B cell (primary cell): ENCODE measurements at regions of chr4 and their contacts with region 1.

Region 1: GRCh38 chr4:40778090-40778489 is 28.3 kb downstream of the NSUN7 start:
- DNase-seq: no peak
- ATAC-seq: no peak
- H3K4me3 ChIP-seq: no peak overlapping the region
- H3K4me3 Mint-ChIP-seq: no peak overlapping the region
- H3K27ac ChIP-seq: no peak overlapping the region
- H3K27ac Mint-ChIP-seq: no peak overlapping the region
- H3K4me1 ChIP-seq: peaks cover 3 to 5% of the 10 kb centered on the region in 2 donors
- H3K4me1 Mint-ChIP-seq: peaks cover 5% of the 10 kb centered on the region
- H3K27me3 ChIP-seq: no peaks in the 10 kb centered on the region
- H3K27me3 Mint-ChIP-seq: no peaks in the 10 kb centered on the region
- CTCF ChIP-seq: no peak

Region 2: GRCh38 chr4:39353478-39354253 is 1424.4 kb before region 1 on chr4:
- CTCF ChIA-PET with region 1: no interaction called
- POLR2A ChIA-PET with region 1: interaction called, 12 read pairs
- intact Hi-C with region 1: no loop called
- DNase-seq: peak; percentile 67
- ATAC-seq: peak; percentile 59
- H3K4me3 ChIP-seq: peak overlapping the region; percentile 2 to 72 (median 43)
- H3K4me3 Mint-ChIP-seq: peak overlapping the region; percentile 90
- H3K27ac ChIP-seq: peak overlapping the region; percentile 46 to 74
- H3K27ac Mint-ChIP-seq: peak overlapping the region; percentile 89
- H3K4me1 ChIP-seq: peaks cover 50 to 54% of the 10 kb centered on the region in 2 donors
- H3K4me1 Mint-ChIP-seq: peaks cover 54% of the 10 kb centered on the region
- H3K27me3 ChIP-seq: no peaks in the 10 kb centered on the region
- H3K27me3 Mint-ChIP-seq: no peaks in the 10 kb centered on the region
- CTCF ChIP-seq: no peak

Region 3: GRCh38 chr4:40238700-40239548 is 539.2 kb before region 1 on chr4:
- CTCF ChIA-PET with region 1: no interaction called
- POLR2A ChIA-PET with region 1: no interaction called
- intact Hi-C with region 1: no loop called
- DNase-seq: no peak
- ATAC-seq: peak; percentile 32
- H3K4me3 ChIP-seq: no peak overlapping the region
- H3K4me3 Mint-ChIP-seq: peak overlapping the region; percentile 27
- H3K27ac ChIP-seq: peak overlapping the region; percentile 3 to 60
- H3K27ac Mint-ChIP-seq: peak overlapping the region; percentile 83
- H3K4me1 ChIP-seq: peaks cover 74 to 80% of the 10 kb centered on the region in 2 donors
- H3K4me1 Mint-ChIP-seq: peaks cover 81% of the 10 kb centered on the region
- H3K27me3 ChIP-seq: no peaks in the 10 kb centered on the region
- H3K27me3 Mint-ChIP-seq: no peaks in the 10 kb centered on the region
- CTCF ChIP-seq: no peak